T-cell (primary cell): ENCODE measurements at regions of chr1 and their contacts with region 1.

Region 1: GRCh38 chr1:97693601-97694000 is 227.2 kb downstream of the DPYD start:
- DNase-seq: no peak
- ATAC-seq: no peak
- H3K4me3 ChIP-seq: no peak overlapping the region
- H3K4me3 Mint-ChIP-seq: no peak overlapping the region
- H3K27ac ChIP-seq: no peak overlapping the region
- H3K27ac Mint-ChIP-seq: no peak overlapping the region
- H3K4me1 ChIP-seq: no peaks in the 10 kb centered on the region
- H3K4me1 Mint-ChIP-seq: no peaks in the 10 kb centered on the region
- H3K27me3 ChIP-seq: no peaks in the 10 kb centered on the region
- H3K27me3 Mint-ChIP-seq: no peaks in the 10 kb centered on the region

Region 2: GRCh38 chr1:97379387-97380075 is 314.1 kb before region 1 on chr1:
- CTCF ChIA-PET with region 1: no interaction called
- POLR2A ChIA-PET with region 1: interaction called in 1 of 2 experiments, 10 read pairs
- DNase-seq: no peak
- ATAC-seq: no peak
- H3K4me3 ChIP-seq: no peak overlapping the region
- H3K4me3 Mint-ChIP-seq: no peak overlapping the region
- H3K27ac ChIP-seq: no peak overlapping the region
- H3K27ac Mint-ChIP-seq: peak overlapping the region in 1 of 2 donors; percentile 19
- H3K4me1 ChIP-seq: peaks cover 0 to 3% of the 10 kb centered on the region in 2 experiments
- H3K4me1 Mint-ChIP-seq: peaks cover 5 to 12% (median 5%) of the 10 kb centered on the region in 3 donors
- H3K27me3 ChIP-seq: no peaks in the 10 kb centered on the region
- H3K27me3 Mint-ChIP-seq: no peaks in the 10 kb centered on the region